Endothelial cell of umbilical vein (primary cell): ENCODE measurements at regions of chr2 and their contacts with region 1.

Region 1: GRCh38 chr2:181041661-181042060 is 61.3 kb downstream of the UBE2E3 start:
- DNase-seq: no peak
- H3K4me3 ChIP-seq: no peak overlapping the region
- H3K27ac ChIP-seq: no peak overlapping the region
- H3K4me1 ChIP-seq: no peaks in the 10 kb centered on the region
- H3K27me3 ChIP-seq: no peaks in the 10 kb centered on the region
- CTCF ChIP-seq: no peak
- POLR2A ChIP-seq: no peak

Region 2: DNA sequence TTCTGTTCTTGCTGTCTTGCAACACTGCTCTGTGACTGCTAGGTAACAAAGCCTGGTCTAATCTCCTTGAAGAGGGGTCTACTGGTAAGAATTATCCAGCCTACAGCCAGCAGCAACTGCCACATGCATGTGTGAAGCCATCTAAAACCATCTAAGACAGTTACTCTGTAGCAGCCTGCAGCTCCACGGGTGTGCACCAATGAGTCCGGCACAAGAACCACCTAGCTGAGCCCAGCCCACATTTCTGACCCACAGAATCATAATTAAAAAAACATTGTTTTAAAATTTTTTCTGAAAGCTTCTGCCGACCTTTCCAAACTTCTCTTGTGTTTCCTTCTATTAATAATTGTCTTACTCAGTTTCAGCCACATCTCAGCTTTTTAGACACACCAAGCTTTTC is 1283.0 kb before region 1 on chr2:
- CTCF ChIA-PET with region 1: no interaction called
- POLR2A ChIA-PET with region 1: no interaction called
- dilution Hi-C with region 1: no loop called
- intact Hi-C with region 1: loop called (anchors 5 kb)
- DNase-seq: no peak
- H3K4me3 ChIP-seq: no peak overlapping the region
- H3K27ac ChIP-seq: no peak overlapping the region
- H3K4me1 ChIP-seq: no peaks in the 10 kb centered on the region
- H3K27me3 ChIP-seq: no peaks in the 10 kb centered on the region
- CTCF ChIP-seq: no peak
- POLR2A ChIP-seq: no peak